Left ventricle myocardium inferior (tissue), 1 donor: ENCODE measurements at regions of chr7 and their contacts with region 1.

Region 1: GRCh38 chr7:64618785-64619456 is 47.0 kb upstream of the ZNF107 start:
- DNase-seq: no peak
- H3K4me3 ChIP-seq: no peak overlapping the region
- H3K27ac ChIP-seq: no peak overlapping the region
- H3K4me1 ChIP-seq: no peaks in the 10 kb centered on the region
- H3K27me3 ChIP-seq: no peaks in the 10 kb centered on the region
- CTCF ChIP-seq: peak; percentile 77

Region 2: DNA sequence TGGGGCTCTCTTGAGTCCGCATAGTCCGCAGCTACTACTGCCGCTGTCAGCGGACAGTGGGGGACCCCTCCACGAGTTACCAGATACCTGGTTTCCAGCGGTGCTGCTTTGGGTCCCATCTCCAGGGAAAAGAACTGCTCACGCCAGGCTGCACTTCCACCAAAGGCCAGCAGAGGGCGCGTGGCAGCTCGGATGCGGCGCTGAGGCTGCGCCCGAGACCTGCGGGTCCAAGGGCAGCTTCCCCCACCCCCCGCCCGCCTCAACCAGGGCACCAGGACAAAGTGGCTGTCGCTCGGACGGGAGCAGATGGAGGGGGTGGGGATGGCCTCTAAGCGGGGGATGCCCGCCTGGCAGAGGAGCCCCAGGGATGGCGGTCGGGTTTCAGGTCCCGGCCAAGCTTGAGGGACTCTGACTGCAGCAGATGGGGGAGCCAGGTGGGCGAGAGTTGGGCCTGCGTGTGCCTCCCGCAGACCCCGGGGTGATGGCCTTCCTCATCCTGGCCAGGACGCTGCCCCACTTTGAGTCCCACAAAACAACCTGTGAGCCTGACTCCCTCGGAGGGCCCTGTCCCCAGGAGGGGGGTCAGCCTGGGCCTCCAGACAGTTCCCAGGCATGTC is 435.7 kb before region 1 on chr7:
- intact Hi-C with region 1: loop called (anchors 5 kb)
- DNase-seq: no peak
- H3K4me3 ChIP-seq: no peak overlapping the region
- H3K27ac ChIP-seq: no peak overlapping the region
- H3K4me1 ChIP-seq: peaks cover 2% of the 10 kb centered on the region
- H3K27me3 ChIP-seq: peaks cover 40% of the 10 kb centered on the region
- CTCF ChIP-seq: peak; percentile 88